AG04450 (cell line): ENCODE measurements at regions of chr1 and their contacts with region 1.

Region 1: GRCh38 chr1:221813887-221814286 is 72.0 kb upstream of the DUSP10 start:
- DNase-seq: no peak
- H3K4me3 ChIP-seq: no peak overlapping the region
- H3K27ac ChIP-seq: no peak overlapping the region
- H3K27me3 ChIP-seq: no peaks in the 10 kb centered on the region
- CTCF ChIP-seq: no peak

Region 2: GRCh38 chr1:220943319-220943996 is 870.4 kb before region 1 on chr1:
- CTCF ChIA-PET with region 1: interaction called, 13 read pairs
- POLR2A ChIA-PET with region 1: no interaction called
- DNase-seq: no peak
- H3K4me3 ChIP-seq: no peak overlapping the region
- H3K27ac ChIP-seq: no peak overlapping the region
- H3K27me3 ChIP-seq: no peaks in the 10 kb centered on the region
- CTCF ChIP-seq: no peak

Region 3: DNA sequence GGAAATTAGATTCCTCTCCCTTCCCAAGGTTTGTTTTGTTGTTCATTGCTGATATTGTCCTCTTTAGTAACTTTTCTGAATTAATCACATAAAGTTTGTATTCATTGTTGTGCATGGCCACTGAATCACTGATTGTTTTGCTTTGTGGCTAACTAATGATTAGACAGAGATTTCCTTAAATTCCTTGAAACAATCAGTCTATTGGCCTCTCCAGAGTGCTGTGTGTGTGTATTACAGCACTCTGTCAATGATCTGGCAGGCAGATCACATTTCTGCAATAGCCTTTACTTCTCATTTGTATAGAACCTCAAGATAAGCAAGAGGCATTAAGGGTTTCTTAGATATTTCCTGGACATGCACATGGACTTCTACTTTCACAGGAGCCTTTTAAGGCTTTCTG is 150.6 kb before region 1 on chr1:
- CTCF ChIA-PET with region 1: no interaction called
- POLR2A ChIA-PET with region 1: no interaction called
- DNase-seq: no peak
- H3K4me3 ChIP-seq: no peak overlapping the region
- H3K27ac ChIP-seq: no peak overlapping the region
- H3K27me3 ChIP-seq: no peaks in the 10 kb centered on the region
- CTCF ChIP-seq: no peak